ENCODE measurements at regions of chr6 and their contacts with region 1.

Region 1: GRCh38 chr6:139230391-139230840 is 61.4 kb downstream of the TXLNB start:
- DNase-seq: peak; percentile 6 to 86
- H3K4me3 ChIP-seq: no peak overlapping the region
- H3K27ac ChIP-seq: no peak overlapping the region
- H3K4me1 ChIP-seq: 0 out of 2 replicates have a peak, but pooled peaks cover 8% of the 10 kb centered on the region
- H3K27me3 ChIP-seq: no peaks in the 10 kb centered on the region
- CTCF ChIP-seq: peak; percentile 41; the same call in 1 of the 2 replicates

Region 2: DNA sequence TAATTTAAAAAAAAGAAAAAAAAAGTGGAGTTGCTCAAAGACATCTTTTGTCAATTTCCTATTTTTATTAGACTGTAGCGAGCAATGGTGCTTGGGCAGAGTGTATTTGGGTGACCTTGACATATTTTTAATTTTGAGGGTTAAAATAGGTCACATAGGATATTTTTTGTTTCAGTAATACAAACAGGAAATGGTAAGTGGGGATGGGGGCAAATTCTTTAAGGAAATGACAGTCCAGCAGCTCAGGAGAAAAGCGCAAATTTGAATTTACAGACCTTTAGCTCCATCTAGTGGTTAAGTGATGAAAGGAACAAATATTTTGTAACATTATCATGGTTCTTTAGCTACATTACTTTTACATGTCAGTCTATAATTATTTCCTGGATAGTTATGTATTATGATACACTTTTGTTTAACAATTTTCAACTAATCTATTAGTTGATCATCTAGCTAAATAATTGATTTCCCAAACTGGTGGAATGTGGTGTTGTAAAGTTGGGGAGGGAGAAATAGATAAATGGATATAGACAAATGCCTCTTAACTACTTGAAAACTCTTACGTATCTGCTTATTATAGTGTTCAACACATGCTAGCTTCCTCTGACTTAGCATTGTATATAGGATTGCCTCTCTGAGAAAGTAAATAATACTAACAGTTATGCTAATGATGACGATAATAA is 134.0 kb after region 1 on chr6:
- CTCF ChIA-PET with region 1: interaction called, 5 read pairs
- POLR2A ChIA-PET with region 1: no interaction called
- intact Hi-C with region 1: loop called (anchors 1 kb)
- DNase-seq: peak in 1 of 2 experiments; percentile 65
- H3K4me3 ChIP-seq: no peak overlapping the region
- H3K27ac ChIP-seq: no peak overlapping the region
- H3K4me1 ChIP-seq: peaks cover 9% of the 10 kb centered on the region
- H3K27me3 ChIP-seq: no peaks in the 10 kb centered on the region
- CTCF ChIP-seq: peak; percentile 97

Measured in PC-9 (cell line).